Right ventricle myocardium superior (tissue), 1 donor: ENCODE measurements at regions of chr3 and their contacts with region 1.

Region 1: GRCh38 chr3:62343755-62344154 is 29.6 kb downstream of the FEZF2 start:
- DNase-seq: no peak
- ATAC-seq: no peak

Region 2: DNA sequence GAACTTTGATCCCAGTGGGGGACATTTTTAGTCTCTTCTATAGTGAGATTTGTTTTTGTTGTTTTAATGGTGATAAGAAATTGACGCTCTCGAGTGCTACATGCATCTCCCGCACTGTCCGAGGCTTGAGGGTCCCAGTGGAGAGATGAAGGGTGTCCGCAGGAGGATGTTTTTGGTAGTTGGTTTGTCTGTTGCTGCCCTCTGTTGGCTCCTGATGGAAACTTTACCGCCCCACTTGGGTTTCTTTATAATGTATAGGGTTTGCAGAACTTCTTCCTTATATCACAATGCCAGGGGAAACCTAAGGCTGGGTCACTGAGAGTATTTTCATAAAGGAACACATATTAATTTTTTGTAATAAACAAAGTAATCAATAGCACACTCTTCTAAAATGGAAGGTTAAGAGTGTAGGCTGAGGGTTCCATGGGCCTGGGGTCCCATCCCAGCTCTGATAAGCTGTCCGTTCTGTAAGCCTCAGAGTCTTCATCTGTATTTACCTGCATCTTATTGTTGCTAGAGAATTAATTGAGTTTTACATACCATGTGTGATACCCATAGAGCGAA is 214.9 kb after region 1 on chr3:
- intact Hi-C with region 1: loop called (anchors 10 kb)
- DNase-seq: no peak
- ATAC-seq: no peak